ENCODE measurements at regions of chr1 and their contacts with region 1.

Region 1: GRCh38 chr1:2391041-2391930 is at the starts of genes MORN1 and RER1:
- DNase-seq: peak; percentile 100
- ATAC-seq: peak; percentile 94
- H3K4me3 ChIP-seq: peak within 1 kb of the TSS; percentile 93
- H3K27ac ChIP-seq: peak within 1 kb of the TSS; percentile 38
- H3K4me1 ChIP-seq: peaks cover 22% of the 10 kb centered on the region
- H3K27me3 ChIP-seq: no peaks in the 10 kb centered on the region
- CTCF ChIP-seq: no peak
- total RNA-seq, gene MORN1: 11.2 and 30.5 TPM in 2 replicates
- total RNA-seq, gene RER1: 160 TPM in 2 replicates

Region 2: DNA sequence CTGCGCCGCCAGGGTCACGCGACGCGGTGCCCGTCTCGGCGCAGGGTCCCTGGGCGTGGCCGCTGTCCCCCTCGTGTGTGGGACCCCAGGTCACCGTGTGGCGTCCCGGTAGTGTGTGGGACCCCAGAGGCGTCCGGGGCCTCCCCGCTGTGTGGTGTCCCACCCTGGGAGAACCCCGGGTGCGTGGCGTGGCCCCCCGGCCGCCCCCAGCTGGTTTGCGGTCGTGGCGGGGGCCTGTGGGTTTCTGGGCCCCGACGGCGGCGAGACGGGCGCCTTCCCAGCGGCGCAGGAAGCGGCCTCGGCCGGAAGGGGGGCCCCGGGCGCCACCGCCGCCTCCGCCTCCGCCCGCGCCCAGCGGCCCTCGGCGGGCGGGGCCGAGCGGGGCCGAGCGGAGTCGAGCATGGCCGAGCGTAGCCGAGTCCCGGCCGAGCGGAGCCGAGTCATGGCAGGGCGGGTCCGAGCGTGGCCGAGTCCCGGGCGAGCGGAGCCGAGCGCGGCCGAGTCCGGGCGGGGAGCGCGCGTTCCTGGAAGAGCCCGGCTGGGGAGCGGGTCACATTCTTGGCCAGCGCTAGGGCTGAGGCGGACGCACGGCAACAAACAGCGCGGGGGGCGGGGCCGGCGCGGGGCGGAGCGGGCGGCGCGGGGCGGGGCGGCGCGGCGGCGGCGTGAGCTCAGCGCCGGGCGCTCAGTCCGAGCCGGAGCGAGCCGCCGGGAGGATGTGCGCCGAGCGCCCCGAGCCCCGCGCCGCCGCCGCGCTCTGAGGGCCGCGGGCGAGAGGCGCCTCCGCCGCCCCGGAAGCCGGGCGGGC is 163.7 kb before region 1 on chr1:
- CTCF ChIA-PET with region 1: no interaction called
- POLR2A ChIA-PET with region 1: interaction called, 15 read pairs
- intact Hi-C with region 1: no loop called
- DNase-seq: peak; percentile 99
- ATAC-seq: peak; percentile 85
- H3K4me3 ChIP-seq: peak overlapping the region; percentile 79
- H3K27ac ChIP-seq: peak overlapping the region; percentile 60
- H3K4me1 ChIP-seq: peaks cover 20% of the 10 kb centered on the region
- H3K27me3 ChIP-seq: no peaks in the 10 kb centered on the region
- CTCF ChIP-seq: no peak

Region 3: GRCh38 chr1:2404840-2405476 is 13.7 kb after region 1 on chr1:
- CTCF ChIA-PET with region 1: no interaction called
- POLR2A ChIA-PET with region 1: interaction called, 11 read pairs
- intact Hi-C with region 1: no loop called
- DNase-seq: no peak
- ATAC-seq: no peak
- H3K4me3 ChIP-seq: no peak overlapping the region
- H3K27ac ChIP-seq: no peak overlapping the region
- H3K4me1 ChIP-seq: no peaks in the 10 kb centered on the region
- H3K27me3 ChIP-seq: no peaks in the 10 kb centered on the region
- CTCF ChIP-seq: no peak

Region 4: GRCh38 chr1:2545759-2546514 is 154.7 kb after region 1 on chr1:
- CTCF ChIA-PET with region 1: no interaction called
- POLR2A ChIA-PET with region 1: no interaction called
- intact Hi-C with region 1: no loop called
- DNase-seq: peak; percentile 95
- ATAC-seq: peak; percentile 64
- H3K4me3 ChIP-seq: peak overlapping the region; percentile 69
- H3K27ac ChIP-seq: peak overlapping the region; percentile 64
- H3K4me1 ChIP-seq: peaks cover 22% of the 10 kb centered on the region
- H3K27me3 ChIP-seq: no peaks in the 10 kb centered on the region
- CTCF ChIP-seq: no peak